Common myeloid progenitor, CD34-positive (primary cell): ENCODE measurements at regions of chr22 and their contacts with region 1.

Region 1: DNA sequence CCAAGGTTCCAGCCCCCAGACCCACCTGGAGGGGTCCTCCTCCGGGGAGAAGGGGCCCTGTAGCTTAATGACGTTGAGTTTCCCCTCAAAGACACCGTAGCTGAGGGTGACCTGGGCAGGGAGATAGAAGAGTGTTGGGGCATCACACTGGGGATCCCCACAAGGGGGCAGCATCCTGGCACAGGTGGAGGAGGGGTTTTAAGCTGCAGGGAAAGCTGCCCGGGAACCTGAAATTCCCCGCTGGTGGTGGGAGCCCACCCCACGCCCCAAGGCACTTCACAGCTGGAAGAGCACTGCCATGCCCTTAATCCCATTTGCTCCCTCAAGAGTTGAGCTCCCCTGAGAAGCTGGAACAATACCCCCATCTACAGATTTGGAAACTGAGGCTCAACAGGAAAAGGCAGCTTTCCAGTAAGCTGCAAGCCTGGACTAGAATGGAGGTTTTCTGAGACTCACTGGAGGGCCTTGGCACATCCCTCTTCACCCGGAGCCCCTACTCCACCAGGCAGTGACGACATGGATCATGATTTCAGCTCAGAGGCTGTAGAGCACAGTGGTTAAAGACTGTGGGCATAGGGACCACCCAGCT is 13.7 kb downstream of the MFNG start:
- DNase-seq: peak in 2 of 3 donors; percentile 40 to 45
- H3K4me3 ChIP-seq: no peak overlapping the region
- H3K27ac ChIP-seq: no peak overlapping the region
- H3K4me1 ChIP-seq: no peaks in the 10 kb centered on the region
- H3K27me3 ChIP-seq: no peaks in the 10 kb centered on the region

Region 2: GRCh38 chr22:37353839-37354238 is 118.7 kb before region 1 on chr22:
- CTCF ChIA-PET with region 1: no interaction called
- POLR2A ChIA-PET with region 1: no interaction called
- DNase-seq: no peak
- H3K4me3 ChIP-seq: no peak overlapping the region
- H3K27ac ChIP-seq: no peak overlapping the region
- H3K4me1 ChIP-seq: no peaks in the 10 kb centered on the region
- H3K27me3 ChIP-seq: peaks cover 0 to 5% (median 0%) of the 10 kb centered on the region in 5 experiments

Region 3: GRCh38 chr22:37457093-37457893 is 15.2 kb before region 1 on chr22:
- CTCF ChIA-PET with region 1: interaction called, 20 read pairs
- POLR2A ChIA-PET with region 1: no interaction called
- DNase-seq: peak; percentile 59 to 77 (median 71)
- H3K4me3 ChIP-seq: no peak overlapping the region
- H3K27ac ChIP-seq: no peak overlapping the region
- H3K4me1 ChIP-seq: peaks cover 0 to 6% (median 3%) of the 10 kb centered on the region in 4 experiments
- H3K27me3 ChIP-seq: no peaks in the 10 kb centered on the region

Region 4: GRCh38 chr22:37486224-37486845 is 13.8 kb after region 1 on chr22 and contains the start of gene MFNG:
- CTCF ChIA-PET with region 1: interaction called, 59 read pairs
- POLR2A ChIA-PET with region 1: interaction called, 3 read pairs
- DNase-seq: peak; percentile 61 to 89 (median 81)
- H3K4me3 ChIP-seq: peak within 1 kb of the TSS; percentile 41 to 93 (median 81)
- H3K27ac ChIP-seq: peak within 1 kb of the TSS; percentile 77 to 87
- H3K4me1 ChIP-seq: peaks cover 3 to 63% (median 56%) of the 10 kb centered on the region in 4 experiments
- H3K27me3 ChIP-seq: no peaks in the 10 kb centered on the region

Region 5: DNA sequence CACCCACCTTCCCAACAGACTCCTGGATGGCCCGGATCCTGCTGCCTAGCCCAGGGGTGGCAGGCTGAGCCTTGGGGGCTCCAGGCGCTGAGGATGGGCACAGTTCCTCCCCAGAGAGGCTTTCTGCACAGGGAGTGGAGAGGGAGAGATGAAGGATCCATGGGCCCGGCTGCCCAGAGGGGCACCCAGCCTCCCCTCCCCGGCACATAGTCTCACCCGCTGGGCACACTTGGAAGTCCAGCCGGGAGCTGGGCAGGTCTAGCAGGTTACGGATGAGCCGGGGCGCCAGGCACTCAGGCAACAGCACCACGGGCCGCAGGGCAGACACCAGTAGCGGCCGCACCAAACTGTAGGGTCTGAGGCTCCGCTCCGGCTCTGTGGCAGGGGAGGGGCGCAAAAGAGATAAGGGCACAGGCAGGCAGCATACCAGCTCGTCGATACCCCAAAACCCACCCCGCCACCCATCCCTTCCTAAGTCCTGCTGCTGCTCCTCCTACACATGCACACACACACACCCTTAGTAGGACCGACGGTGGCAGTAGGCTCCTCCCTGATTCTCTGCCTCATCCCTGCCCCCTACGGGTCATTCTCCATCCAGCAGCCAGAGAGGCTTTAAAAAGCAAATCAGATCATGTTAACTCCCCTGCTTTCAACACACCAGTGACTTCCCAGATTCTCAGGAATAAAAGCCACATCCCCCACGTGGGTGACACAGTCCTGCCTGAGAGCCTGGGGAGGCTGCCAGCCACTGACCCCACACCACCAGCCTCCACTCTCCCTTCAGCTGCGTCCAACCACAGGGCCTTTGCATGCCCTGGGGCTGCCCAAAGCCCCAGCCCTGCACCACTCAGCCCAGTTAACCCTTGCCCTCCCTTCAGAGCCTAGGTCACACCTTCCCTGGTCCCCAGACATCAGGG is 20.2 kb after region 1 on chr22:
- CTCF ChIA-PET with region 1: interaction called, 59 read pairs
- POLR2A ChIA-PET with region 1: no interaction called
- DNase-seq: peak; percentile 39 to 67 (median 66)
- H3K4me3 ChIP-seq: no peak overlapping the region
- H3K27ac ChIP-seq: no peak overlapping the region
- H3K4me1 ChIP-seq: peaks cover 0 to 12% (median 6%) of the 10 kb centered on the region in 4 experiments
- H3K27me3 ChIP-seq: no peaks in the 10 kb centered on the region

Region 6: DNA sequence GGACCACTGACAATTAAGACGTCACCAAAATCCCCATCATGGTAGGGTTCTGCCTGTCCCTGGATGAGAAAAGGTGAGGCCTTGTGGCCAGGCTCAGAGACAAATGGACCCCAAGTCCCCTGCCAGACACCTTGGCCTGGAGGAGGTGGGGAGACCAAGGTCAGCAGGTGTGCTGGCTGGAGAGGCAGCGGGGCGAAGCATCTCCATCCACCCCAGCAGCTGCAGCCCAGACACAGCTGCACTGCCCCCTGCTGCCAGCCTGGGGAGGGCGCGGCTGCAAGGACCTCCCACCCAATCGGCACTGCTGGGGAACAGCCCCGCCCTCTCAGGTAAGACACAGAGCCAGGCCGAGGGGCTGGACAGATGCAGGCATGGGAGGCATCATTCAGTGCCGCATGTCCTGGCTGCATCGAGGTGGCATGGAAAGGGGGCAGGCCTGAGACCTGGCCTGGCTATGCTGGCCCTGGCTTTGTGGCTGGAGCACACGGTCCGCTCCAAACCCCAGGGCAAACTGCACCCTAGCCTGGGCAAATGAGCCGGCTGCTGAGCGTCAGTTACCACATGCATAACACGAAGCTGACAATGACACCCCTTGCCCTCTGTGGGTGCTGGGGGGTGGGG is 25.9 kb after region 1 on chr22:
- CTCF ChIA-PET with region 1: interaction called, 59 read pairs
- POLR2A ChIA-PET with region 1: interaction called, 3 read pairs
- DNase-seq: peak; percentile 62 to 71 (median 71)
- H3K4me3 ChIP-seq: no peak overlapping the region
- H3K27ac ChIP-seq: no peak overlapping the region
- H3K4me1 ChIP-seq: peaks cover 0 to 22% (median 19%) of the 10 kb centered on the region in 4 experiments
- H3K27me3 ChIP-seq: no peaks in the 10 kb centered on the region